B cell (primary cell): ENCODE measurements at regions of chr17 and their contacts with region 1.

Region 1: DNA sequence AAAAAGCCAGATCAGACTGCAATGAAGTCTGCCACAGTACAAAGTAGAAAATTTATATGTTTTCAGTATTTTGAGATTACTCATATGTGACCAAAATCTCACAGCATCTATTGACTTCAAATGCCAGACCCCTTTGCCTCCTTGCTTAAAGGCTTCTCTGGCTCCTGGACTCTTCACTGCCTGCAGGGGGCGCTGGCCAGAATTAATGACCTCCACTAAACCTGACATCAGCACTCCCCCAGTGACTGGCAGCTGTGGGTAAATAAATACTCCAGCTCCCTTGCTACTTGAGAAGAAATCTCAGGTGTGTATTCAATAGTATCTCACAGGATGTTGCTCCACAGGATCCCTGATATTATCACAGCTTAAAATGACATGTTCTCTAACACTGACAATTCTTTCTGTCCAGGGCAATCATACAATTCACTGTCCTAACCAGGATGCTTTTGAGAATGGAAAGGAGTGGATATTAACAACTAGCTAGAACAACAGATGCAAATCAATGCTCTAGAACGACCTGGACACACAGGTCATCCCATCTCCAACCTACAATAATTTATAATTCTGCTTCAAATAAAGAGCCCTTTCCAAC is 4.0 kb downstream of the BECN1 start:
- DNase-seq: peak; percentile 71
- ATAC-seq: no peak
- H3K4me3 ChIP-seq: no peak overlapping the region
- H3K4me3 Mint-ChIP-seq: no peak overlapping the region
- H3K27ac ChIP-seq: no peak overlapping the region
- H3K27ac Mint-ChIP-seq: no peak overlapping the region
- H3K4me1 ChIP-seq: peaks cover 6 to 18% of the 10 kb centered on the region in 2 donors
- H3K4me1 Mint-ChIP-seq: peaks cover 23% of the 10 kb centered on the region
- H3K27me3 ChIP-seq: no peaks in the 10 kb centered on the region
- H3K27me3 Mint-ChIP-seq: no peaks in the 10 kb centered on the region
- CTCF ChIP-seq: peak; percentile 86

Region 2: GRCh38 chr17:42554250-42555121 is 265.6 kb before region 1 on chr17:
- CTCF ChIA-PET with region 1: no interaction called
- POLR2A ChIA-PET with region 1: no interaction called
- intact Hi-C with region 1: loop called (anchors 5 kb)
- DNase-seq: peak; percentile 94
- ATAC-seq: peak; percentile 91
- H3K4me3 ChIP-seq: peak overlapping the region; percentile 61 to 99 (median 90)
- H3K4me3 Mint-ChIP-seq: peak overlapping the region; percentile 96
- H3K27ac ChIP-seq: peak overlapping the region; percentile 88 to 96
- H3K27ac Mint-ChIP-seq: peak overlapping the region; percentile 98
- H3K4me1 ChIP-seq: peaks cover 15 to 27% of the 10 kb centered on the region in 2 donors
- H3K4me1 Mint-ChIP-seq: peaks cover 20% of the 10 kb centered on the region
- H3K27me3 ChIP-seq: no peaks in the 10 kb centered on the region
- H3K27me3 Mint-ChIP-seq: no peaks in the 10 kb centered on the region
- CTCF ChIP-seq: no peak

Region 3: DNA sequence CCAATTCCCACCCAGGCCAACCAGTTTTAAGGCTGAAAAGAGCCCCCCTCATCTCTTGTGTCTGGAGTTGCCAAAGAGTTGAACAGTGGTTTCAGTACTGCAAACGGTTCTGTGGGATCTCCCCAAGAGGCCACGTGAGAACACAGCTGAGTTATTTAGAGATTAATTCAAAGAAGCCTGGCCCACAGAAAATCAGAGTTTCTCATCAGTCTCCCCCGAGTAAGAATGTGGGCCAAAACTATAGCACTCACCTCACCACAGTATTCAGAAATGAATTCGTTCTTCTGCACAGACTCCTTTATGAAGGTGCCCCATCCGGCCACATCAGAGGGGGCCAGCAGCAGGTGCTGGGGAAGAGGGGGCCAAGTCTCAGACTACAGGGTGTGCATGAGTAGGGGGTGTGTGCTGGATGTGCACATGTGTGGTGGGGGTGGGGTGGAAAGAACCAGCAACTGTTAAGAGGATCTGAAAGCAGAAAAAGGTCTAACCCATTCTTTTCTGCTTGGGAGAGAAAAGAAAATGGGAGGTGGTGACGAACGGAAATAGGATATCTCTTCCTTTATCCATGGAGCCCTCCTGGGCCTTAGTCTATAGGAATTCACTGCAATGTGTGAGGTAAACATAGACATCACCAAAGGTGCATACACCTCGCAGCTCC is 115.1 kb before region 1 on chr17:
- CTCF ChIA-PET with region 1: no interaction called
- POLR2A ChIA-PET with region 1: no interaction called
- intact Hi-C with region 1: no loop called
- DNase-seq: peak; percentile 76
- ATAC-seq: peak; percentile 64
- H3K4me3 ChIP-seq: no peak overlapping the region
- H3K4me3 Mint-ChIP-seq: peak overlapping the region; percentile 43
- H3K27ac ChIP-seq: peak overlapping the region; percentile 33 to 68
- H3K27ac Mint-ChIP-seq: peak overlapping the region; percentile 79
- H3K4me1 ChIP-seq: peaks cover 33 to 70% of the 10 kb centered on the region in 2 donors
- H3K4me1 Mint-ChIP-seq: peaks cover 50% of the 10 kb centered on the region
- H3K27me3 ChIP-seq: no peaks in the 10 kb centered on the region
- H3K27me3 Mint-ChIP-seq: no peaks in the 10 kb centered on the region
- CTCF ChIP-seq: no peak

Region 4: DNA sequence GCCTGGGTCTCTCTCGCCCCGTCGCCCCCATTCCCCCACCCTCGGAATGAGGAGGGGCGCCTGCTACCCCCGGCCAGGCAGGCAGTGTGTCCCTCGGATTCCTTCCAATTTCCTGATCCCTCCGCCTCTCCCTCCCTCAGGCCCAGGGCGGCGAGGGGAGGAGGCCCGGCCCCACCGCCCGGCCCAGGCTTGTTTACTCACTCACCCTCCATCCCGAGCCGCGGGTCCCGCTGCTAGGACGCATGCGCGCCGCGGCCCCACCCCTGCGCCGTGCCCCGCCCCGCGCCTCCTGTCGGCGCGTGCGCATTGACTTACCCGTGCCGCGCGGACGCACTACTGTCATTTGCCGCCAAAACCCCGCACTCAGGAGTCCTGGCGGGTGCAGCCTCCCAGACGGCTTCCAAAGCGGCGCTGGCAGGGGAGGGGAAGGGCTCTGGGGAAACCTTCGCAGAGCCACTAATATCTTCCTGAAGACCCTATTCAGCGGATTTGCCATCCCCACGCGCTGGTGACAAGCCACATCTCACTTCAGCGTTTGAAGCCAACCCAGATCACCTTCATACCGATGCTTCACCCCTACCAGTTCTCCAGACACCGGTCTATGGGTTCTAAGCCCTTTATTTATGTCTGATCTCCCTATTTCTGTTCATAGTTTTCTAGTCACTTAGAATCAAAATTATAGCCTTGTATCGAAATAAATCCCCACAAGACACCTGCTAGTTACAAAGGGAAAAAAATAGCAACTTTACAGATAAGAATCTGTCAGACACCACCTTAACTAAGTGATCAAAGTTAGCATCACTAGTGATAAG is 75.0 kb before region 1 on chr17 and contains the start of gene EZH1:
- CTCF ChIA-PET with region 1: interaction called, 3 read pairs
- POLR2A ChIA-PET with region 1: no interaction called
- intact Hi-C with region 1: loop called (anchors 1 kb)
- DNase-seq: peak; percentile 95
- ATAC-seq: peak; percentile 86
- H3K4me3 ChIP-seq: peak within 1 kb of the TSS; percentile 56 to 76 (median 70)
- H3K4me3 Mint-ChIP-seq: peak within 1 kb of the TSS; percentile 99
- H3K27ac ChIP-seq: peak within 1 kb of the TSS; percentile 67 to 92
- H3K27ac Mint-ChIP-seq: peak within 1 kb of the TSS; percentile 99
- H3K4me1 ChIP-seq: peaks cover 25 to 27% of the 10 kb centered on the region in 2 donors
- H3K4me1 Mint-ChIP-seq: peaks cover 29% of the 10 kb centered on the region
- H3K27me3 ChIP-seq: peaks cover 0 to 16% (median under 1%) of the 10 kb centered on the region in 4 experiments
- H3K27me3 Mint-ChIP-seq: peaks cover 18% of the 10 kb centered on the region
- CTCF ChIP-seq: no peak
- total RNA-seq, gene EZH1: 169 and 180 TPM in 2 replicates

Region 5: DNA sequence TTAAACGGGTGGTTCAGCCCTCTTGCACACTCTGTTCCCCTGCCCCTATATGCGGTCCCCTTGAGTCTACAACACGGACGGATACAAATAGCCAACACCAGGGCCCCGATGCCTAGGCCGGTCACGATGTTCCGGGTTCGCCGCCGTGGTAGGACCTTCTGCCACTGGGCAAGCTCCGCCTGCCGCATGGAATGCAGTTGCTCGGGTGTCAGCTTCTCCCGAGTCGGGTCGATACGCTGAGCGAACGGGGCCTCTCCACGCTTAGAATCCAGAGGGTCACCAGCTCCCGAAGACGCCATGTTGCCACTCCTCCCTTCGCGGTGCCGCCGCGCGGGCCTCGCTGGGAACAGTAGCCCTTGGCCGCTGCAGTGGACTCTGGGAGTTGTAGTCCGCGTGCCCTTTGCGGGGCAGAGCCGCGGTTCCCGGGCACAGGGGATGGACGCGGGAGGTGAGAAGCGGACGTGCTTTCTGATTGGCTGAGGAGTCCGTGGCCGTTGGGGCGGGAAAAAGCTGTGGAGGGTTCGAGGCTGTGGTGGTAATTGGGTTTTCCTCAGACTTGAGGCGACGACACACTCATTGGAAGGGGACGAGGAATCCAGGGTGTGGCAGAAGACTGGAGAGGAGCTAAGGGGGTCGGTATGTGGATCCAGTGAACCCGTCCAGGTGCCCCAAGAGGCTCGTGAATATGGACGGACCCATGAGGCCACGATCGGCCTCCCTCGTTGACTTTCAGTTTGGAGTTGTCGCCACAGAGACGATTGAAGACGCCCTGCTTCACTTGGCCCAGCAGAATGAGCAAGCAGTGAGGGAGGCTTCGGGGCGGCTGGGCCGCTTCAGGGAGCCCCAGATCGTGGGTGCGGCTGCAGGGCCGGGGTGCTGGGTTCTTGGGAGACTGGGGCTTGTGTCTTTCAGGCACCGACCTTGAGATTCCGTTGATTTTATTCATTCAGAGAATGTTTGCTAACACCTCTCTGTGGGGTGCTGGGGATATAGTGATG is 21.4 kb before region 1 on chr17 and contains the starts of genes CNTD1 and COA3:
- CTCF ChIA-PET with region 1: interaction called, 10 read pairs
- POLR2A ChIA-PET with region 1: interaction called, 10 read pairs
- intact Hi-C with region 1: loop called (anchors 1 kb)
- DNase-seq: peak; percentile 79
- ATAC-seq: peak; percentile 99
- H3K4me3 ChIP-seq: peak within 1 kb of the TSS; percentile 59 to 90 (median 76)
- H3K4me3 Mint-ChIP-seq: peak within 1 kb of the TSS; percentile 96
- H3K27ac ChIP-seq: peak within 1 kb of the TSS; percentile 4 to 69
- H3K27ac Mint-ChIP-seq: peak within 1 kb of the TSS; percentile 83
- H3K4me1 ChIP-seq: peaks cover 14 to 21% of the 10 kb centered on the region in 2 donors
- H3K4me1 Mint-ChIP-seq: peaks cover 27% of the 10 kb centered on the region
- H3K27me3 ChIP-seq: no peaks in the 10 kb centered on the region
- H3K27me3 Mint-ChIP-seq: peaks cover 5% of the 10 kb centered on the region
- CTCF ChIP-seq: no peak
- total RNA-seq, gene CNTD1: not detected in 2 replicates
- total RNA-seq, gene COA3: 31.9 and 32.1 TPM in 2 replicates

Region 6: GRCh38 chr17:42832974-42833766 is 13.1 kb after region 1 on chr17 and contains the start of gene PSME3:
- CTCF ChIA-PET with region 1: interaction called, 28 read pairs
- POLR2A ChIA-PET with region 1: interaction called, 16 read pairs
- intact Hi-C with region 1: loop called (anchors 1 kb)
- DNase-seq: peak; percentile 95
- ATAC-seq: peak; percentile 93
- H3K4me3 ChIP-seq: peak within 1 kb of the TSS; percentile 88 to 99 (median 92)
- H3K4me3 Mint-ChIP-seq: peak within 1 kb of the TSS; percentile 98
- H3K27ac ChIP-seq: peak within 1 kb of the TSS; percentile 84 to 94
- H3K27ac Mint-ChIP-seq: peak within 1 kb of the TSS; percentile 98
- H3K4me1 ChIP-seq: peaks cover 12 to 20% of the 10 kb centered on the region in 2 donors
- H3K4me1 Mint-ChIP-seq: peaks cover 24% of the 10 kb centered on the region
- H3K27me3 ChIP-seq: no peaks in the 10 kb centered on the region
- H3K27me3 Mint-ChIP-seq: no peaks in the 10 kb centered on the region
- CTCF ChIP-seq: no peak
- total RNA-seq, gene PSME3: 70.3 and 76.2 TPM in 2 replicates

Region 7: DNA sequence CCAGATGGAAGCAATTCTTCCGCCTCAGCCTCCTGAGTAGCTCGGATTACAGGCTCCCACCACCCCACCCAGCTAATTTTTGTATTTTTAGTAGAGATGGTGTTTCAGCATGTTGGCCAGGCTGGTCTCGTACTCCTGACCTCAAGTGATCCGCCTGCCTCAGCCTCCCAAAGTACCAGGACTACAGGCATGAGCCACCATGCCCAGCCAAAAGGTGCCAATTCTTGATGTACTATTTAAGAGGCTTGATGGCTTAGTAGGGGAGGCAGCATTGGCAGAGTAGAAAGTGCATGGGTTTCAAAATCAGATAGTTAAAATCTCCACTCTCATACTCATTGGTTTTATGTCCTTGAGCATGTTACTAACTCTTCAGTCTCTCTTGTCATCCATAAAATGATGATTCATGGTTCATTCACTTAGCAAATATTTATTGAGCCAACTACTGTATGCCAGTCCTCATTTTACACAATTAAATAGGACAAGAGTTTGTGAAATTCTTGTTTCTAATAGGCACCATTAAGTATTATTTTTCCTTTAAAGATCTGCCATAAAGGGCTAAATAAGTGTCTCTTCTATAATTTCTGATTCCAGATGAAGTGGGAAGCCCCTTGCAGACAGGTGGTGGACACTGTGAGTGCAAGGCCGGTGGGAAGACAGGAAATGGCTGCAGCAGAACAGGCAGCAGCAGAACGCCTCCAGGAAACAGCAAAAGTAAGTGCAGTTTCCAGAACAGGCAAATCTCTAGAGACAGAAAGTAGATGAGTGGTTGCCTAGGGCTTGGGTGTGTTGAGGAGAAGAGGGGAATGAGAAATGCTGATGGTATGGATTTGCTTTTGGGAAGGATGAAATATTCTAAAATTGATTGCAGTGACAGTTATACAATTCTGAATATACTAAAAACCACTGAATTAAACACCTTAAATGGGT is 169.9 kb after region 1 on chr17:
- CTCF ChIA-PET with region 1: no interaction called
- POLR2A ChIA-PET with region 1: no interaction called
- intact Hi-C with region 1: no loop called
- DNase-seq: no peak
- ATAC-seq: no peak
- H3K4me3 ChIP-seq: no peak overlapping the region
- H3K4me3 Mint-ChIP-seq: no peak overlapping the region
- H3K27ac ChIP-seq: peak overlapping the region in 1 of 2 donors; percentile 17
- H3K27ac Mint-ChIP-seq: peak overlapping the region; percentile 56
- H3K4me1 ChIP-seq: peaks cover 30 to 33% of the 10 kb centered on the region in 2 donors
- H3K4me1 Mint-ChIP-seq: peaks cover 43% of the 10 kb centered on the region
- H3K27me3 ChIP-seq: no peaks in the 10 kb centered on the region
- H3K27me3 Mint-ChIP-seq: no peaks in the 10 kb centered on the region
- CTCF ChIP-seq: no peak

Region 8: DNA sequence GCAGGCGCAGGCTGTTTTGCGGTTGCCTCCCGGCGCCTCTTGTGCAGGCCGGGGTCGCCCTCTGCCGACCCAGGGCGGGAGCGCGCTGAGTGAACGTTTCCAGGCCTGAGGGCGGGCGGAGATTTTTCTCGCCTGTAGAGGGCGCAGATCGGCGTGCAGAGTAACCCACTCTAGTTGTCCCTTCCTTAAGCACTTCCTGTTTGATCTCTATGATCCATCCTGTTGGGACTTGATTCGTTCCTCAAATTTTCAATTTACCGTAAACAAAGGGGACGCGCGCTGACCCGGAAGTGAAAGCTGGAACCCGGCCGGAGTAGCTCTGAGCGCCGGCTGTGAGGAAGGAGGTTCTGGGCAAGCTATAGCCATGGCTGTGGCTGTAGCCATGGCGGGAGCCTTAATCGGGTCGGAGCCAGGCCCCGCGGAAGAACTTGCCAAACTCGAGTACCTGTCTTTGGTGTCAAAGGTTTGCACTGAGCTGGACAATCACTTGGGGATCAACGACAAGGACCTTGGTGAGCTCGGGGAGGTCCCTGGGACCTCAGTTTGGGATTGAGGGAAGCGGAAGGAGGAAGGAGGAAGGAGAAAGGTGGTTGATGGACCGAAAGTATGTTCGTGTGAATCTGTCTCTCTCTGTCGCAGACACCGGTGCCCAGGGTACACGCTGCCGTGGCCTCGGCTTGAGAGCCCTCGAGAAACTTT is 663.8 kb after region 1 on chr17 and contains the start of gene DHX8:
- CTCF ChIA-PET with region 1: interaction called, 4 read pairs
- POLR2A ChIA-PET with region 1: no interaction called
- intact Hi-C with region 1: loop called (anchors 5 kb)
- DNase-seq: peak; percentile 99
- ATAC-seq: peak; percentile 98
- H3K4me3 ChIP-seq: peak within 1 kb of the TSS; percentile 84 to 99 (median 98)
- H3K4me3 Mint-ChIP-seq: peak within 1 kb of the TSS; percentile 100
- H3K27ac ChIP-seq: peak within 1 kb of the TSS; percentile 82 to 86
- H3K27ac Mint-ChIP-seq: peak within 1 kb of the TSS; percentile 98
- H3K4me1 ChIP-seq: peaks cover 17 to 23% of the 10 kb centered on the region in 2 donors
- H3K4me1 Mint-ChIP-seq: peaks cover 29% of the 10 kb centered on the region
- H3K27me3 ChIP-seq: no peaks in the 10 kb centered on the region
- H3K27me3 Mint-ChIP-seq: no peaks in the 10 kb centered on the region
- CTCF ChIP-seq: peak; percentile 100
- total RNA-seq, gene DHX8: 63.3 and 64.4 TPM in 2 replicates